ENCODE measurements at regions of chr16 and their contacts with region 1.

Region 1: DNA sequence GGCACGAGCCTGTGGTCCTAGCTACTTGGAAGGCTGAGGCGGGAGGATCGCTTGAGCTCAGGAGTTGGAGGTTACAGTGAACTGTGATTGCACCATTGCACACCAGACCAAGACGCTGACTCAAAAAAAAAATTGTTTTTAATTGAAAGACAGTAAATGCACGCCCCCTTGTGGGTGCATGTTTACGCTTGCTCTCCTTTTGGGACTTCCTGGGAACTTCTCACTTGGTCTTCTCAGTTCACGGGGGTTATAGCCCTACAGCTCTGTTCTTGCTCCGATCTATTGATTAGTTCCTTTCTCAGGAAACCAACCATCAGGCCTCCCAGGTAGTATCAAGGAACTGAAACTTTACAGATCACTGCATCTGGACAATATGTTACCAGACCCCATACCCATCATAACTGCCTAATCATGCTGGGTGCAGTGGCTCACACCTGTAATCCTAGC is 14.2 kb upstream of the RIPOR1 start:
- DNase-seq: peak; percentile 57

Region 2: GRCh38 chr16:67372664-67373063 is 141.7 kb before region 1 on chr16:
- CTCF ChIA-PET with region 1: no interaction called
- POLR2A ChIA-PET with region 1: no interaction called
- DNase-seq: no peak

Region 3: GRCh38 chr16:67480833-67481560 is 33.4 kb before region 1 on chr16 and contains the start of gene ATP6V0D1:
- CTCF ChIA-PET with region 1: interaction called, 11 read pairs
- POLR2A ChIA-PET with region 1: interaction called, 4 read pairs
- DNase-seq: peak; percentile 99

Region 4: GRCh38 chr16:67666559-67667452 is 152.4 kb after region 1 on chr16 and contains the starts of genes C16orf86 and ENKD1:
- CTCF ChIA-PET with region 1: no interaction called
- POLR2A ChIA-PET with region 1: no interaction called
- DNase-seq: peak; percentile 86

Measured in HEK293T (cell line).